Activated naive CD4-positive, alpha-beta T cell treated with anti-CD3 and anti-CD28 coated beads, Interleukin-2, amount 10 ng/mL, durations not matched to agents 7 days and 5 days (primary cell): ENCODE measurements at regions of chr9 and their contacts with region 1.

Region 1: DNA sequence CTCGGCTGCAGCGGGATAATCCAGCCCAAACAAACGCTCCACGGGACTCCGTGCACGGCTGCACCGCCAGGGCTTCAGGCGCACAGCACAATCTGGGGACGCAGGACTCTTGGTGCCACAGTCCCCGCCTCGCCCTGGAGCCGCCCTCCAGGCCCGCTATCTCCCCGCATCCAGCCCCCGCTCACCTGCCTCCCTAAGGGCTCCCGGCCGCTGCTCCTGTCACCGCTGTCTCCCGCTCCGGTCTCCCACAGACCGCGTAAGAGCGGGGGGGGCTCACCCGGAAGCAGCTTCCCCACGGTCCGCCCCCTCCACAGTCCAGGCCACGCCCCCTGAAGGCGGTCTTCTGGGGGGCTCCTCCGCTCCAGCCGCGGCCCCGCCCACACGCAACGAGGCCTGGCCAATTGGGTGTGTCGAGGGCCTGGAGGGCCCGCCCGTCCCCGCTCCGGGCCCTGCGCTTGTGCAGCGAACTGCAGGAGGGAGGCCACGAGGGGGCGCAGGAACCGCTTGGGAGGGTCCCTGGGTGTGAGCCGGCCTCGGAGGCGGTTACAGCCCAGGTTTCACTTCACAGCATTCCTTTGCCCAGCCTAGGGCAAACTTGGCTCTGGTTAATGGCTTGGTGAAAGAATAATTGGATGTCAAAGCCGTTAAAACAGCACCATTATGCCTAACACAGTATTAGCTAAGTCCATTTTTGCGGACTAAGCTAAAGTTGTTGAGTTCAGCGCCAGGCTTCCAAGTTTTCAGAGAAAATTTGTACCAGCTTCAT is at the start of gene ALAD:
- DNase-seq: peak; percentile 99
- H3K4me3 Mint-ChIP-seq: peak within 1 kb of the TSS; percentile 94
- H3K27ac Mint-ChIP-seq: peak within 1 kb of the TSS; percentile 83
- H3K4me1 Mint-ChIP-seq: peaks cover 26% of the 10 kb centered on the region
- H3K27me3 Mint-ChIP-seq: peaks cover 3% of the 10 kb centered on the region

Region 2: GRCh38 chr9:112939418-112939817 is 461.8 kb before region 1 on chr9:
- CTCF ChIA-PET with region 1: no interaction called
- DNase-seq: no peak
- H3K4me3 Mint-ChIP-seq: no peak overlapping the region
- H3K27ac Mint-ChIP-seq: no peak overlapping the region
- H3K4me1 Mint-ChIP-seq: no peaks in the 10 kb centered on the region
- H3K27me3 Mint-ChIP-seq: peaks cover 8% of the 10 kb centered on the region

Region 3: DNA sequence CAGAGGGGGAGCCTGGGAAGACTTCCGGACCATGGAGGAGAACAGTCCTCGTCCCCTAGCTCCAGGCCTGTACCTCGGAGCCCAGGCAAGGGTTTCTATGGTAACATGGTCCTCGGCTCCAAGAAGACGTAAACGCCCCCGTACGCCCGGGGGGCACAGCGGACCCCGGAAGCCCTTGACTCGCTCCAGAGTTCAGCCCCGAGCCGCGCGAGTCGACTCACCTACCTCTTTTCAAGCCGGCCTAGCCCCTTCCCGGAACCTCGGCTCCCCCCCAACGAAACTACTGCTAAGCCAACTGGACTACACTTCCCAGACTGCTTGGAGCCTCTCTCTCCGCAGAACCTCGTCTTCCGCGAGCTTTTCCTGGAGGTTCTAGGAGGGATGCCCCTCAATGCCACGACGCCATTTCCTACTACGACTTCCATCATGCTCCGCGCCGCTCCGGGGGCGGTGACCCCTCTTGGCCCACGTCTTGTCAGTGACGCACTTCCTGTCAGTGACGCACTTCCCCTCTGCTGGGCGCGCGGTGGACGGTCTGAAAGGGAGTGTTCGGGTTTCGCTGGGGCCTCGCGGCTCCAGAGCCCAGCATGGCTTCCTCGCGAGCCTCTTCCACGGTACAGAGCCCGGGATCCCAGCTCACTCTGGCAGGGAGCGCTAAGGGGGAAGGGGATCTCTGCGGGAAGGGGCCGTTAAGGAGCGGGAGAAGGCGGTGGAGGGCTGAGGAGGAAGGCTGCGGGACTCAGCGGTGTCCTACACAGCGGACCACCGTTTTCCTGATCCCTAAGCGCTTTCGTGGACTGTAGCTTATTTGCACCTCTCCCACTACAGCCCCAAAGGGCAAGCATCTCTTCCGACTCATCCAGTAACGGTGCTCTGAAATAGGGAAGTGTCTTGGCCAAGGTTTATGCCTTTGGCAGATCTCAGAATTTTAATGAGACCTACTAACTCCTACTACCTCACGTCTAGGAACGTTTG is 125.8 kb before region 1 on chr9 and contains the starts of genes CDC26 and PRPF4:
- CTCF ChIA-PET with region 1: interaction called, 14 read pairs
- DNase-seq: peak; percentile 98
- H3K4me3 Mint-ChIP-seq: no peak within 1 kb of the TSS
- H3K27ac Mint-ChIP-seq: no peak within 1 kb of the TSS
- H3K4me1 Mint-ChIP-seq: peaks cover 24% of the 10 kb centered on the region
- H3K27me3 Mint-ChIP-seq: no peaks in the 10 kb centered on the region

Region 4: DNA sequence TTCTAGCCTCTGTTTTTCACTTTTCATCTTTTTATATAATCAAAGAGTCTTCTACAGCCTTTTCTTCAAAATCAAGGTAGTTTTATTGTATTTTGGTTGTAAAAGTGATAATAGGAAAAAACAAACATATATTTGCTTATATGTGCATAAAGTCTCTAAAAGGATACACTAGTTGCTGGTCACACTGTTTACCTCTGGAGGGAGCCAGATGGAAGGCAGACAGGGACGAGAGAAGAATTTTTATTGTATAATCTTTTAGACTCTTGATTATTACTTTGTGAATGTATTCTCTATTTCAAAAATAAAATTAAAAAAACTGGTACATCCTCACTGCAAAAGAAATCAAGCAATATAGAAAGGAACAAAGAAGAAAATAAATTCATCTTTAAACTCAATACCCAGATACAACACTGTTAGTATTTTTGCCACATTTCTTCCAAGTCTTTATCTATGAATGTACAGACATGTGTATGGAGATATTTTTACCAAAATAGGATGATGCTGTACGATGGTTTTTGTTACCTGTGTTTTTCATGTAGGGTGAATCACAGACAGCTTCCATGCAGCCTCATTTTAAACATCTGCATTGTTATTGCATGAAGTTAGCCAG is 91.9 kb before region 1 on chr9:
- CTCF ChIA-PET with region 1: interaction called, 43 read pairs
- DNase-seq: peak; percentile 52
- H3K4me3 Mint-ChIP-seq: no peak overlapping the region
- H3K27ac Mint-ChIP-seq: no peak overlapping the region
- H3K4me1 Mint-ChIP-seq: no peaks in the 10 kb centered on the region
- H3K27me3 Mint-ChIP-seq: peaks cover 10% of the 10 kb centered on the region